ENCODE measurements at regions of chr12 and their contacts with region 1.

Region 1: GRCh38 chr12:66409195-66409871 is 107.0 kb downstream of the HELB start:
- DNase-seq: peak; percentile 8
- ATAC-seq: peak; percentile 71
- H3K4me3 ChIP-seq: no peak overlapping the region
- H3K27ac ChIP-seq: no peak overlapping the region
- H3K4me1 ChIP-seq: no peaks in the 10 kb centered on the region; the same call in 1 of the 2 replicates
- H3K27me3 ChIP-seq: no peaks in the 10 kb centered on the region
- CTCF ChIP-seq: peak; percentile 82

Region 2: DNA sequence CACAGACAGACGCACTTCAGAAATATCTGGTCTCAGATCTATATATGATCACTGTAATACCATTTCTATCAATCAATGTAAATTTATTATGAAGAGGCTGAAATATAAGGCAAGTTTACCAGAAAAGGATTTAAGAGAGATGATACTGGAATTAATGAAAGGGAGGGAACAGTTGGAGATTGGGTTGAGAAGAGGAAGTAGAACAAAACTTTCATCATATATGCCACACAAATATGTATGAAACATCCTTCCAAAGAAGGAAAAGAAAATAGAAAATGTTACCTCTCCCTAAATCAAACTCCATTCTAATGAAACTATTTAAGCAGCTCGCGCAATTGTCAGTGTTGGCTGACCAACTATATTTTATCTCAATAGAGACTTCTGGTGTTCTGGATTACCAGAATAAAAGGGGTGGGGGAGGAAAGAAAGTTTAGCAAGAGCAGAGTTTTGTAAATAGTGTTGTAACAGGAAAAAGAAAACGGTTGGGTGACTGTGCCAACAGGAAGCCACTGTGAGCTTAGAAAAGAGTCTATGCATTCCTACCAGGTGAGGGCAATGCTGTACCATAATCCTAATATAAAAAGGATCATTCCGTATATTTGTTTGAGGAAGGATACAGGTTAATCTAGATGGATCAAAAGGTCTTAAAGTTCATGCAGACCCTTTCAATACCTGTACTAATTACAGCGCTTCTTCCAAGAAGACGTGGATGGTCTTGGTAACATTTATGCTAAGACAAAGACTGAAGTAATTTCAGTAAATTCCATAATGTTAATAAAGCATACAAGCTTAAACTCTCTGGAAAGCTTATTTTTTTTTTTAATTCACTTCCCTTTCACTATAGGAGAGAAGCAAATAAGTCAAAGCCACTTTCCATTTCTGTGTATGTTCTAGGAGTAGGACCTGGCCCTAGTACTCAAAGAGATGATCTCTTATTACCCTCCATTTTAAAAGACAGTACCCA is 264.3 kb before region 1 on chr12:
- CTCF ChIA-PET with region 1: no interaction called
- POLR2A ChIA-PET with region 1: no interaction called
- in situ Hi-C with region 1: no loop called
- intact Hi-C with region 1: loop called (anchors 10 kb)
- DNase-seq: peak; percentile 41
- ATAC-seq: peak; percentile 73; the same call in 1 of the 2 replicates
- H3K4me3 ChIP-seq: no peak overlapping the region
- H3K27ac ChIP-seq: peak overlapping the region; percentile 73
- H3K4me1 ChIP-seq: peaks cover 3% of the 10 kb centered on the region; the same call in 1 of the 2 replicates
- H3K27me3 ChIP-seq: no peaks in the 10 kb centered on the region
- CTCF ChIP-seq: peak; percentile 61; the same call in 1 of the 2 replicates

Region 3: DNA sequence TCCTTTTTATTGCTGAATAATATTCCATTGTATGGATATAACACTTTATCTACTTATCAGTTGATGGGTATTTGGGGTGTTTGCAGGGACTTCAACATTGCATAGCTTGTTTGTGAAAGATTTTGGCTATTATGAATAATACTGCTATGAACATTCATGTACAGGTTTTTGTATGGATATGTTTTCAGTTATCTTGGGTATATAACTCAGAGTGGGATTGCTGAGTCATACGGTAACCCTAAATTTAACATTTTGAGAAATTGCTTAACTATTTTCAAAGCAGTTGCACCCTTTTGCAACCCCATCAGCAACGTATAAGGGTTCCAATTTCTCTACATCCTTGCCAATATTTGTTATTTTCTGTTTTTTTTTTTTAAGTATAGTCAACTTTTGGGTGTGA is 134.3 kb before region 1 on chr12:
- CTCF ChIA-PET with region 1: no interaction called
- POLR2A ChIA-PET with region 1: no interaction called
- in situ Hi-C with region 1: no loop called
- intact Hi-C with region 1: loop called (anchors 2 kb)
- DNase-seq: no peak
- ATAC-seq: no peak
- H3K4me3 ChIP-seq: no peak overlapping the region
- H3K27ac ChIP-seq: no peak overlapping the region
- H3K4me1 ChIP-seq: no peaks in the 10 kb centered on the region
- H3K27me3 ChIP-seq: peaks cover 8% of the 10 kb centered on the region
- CTCF ChIP-seq: no peak